Dendritic cell treated with granulocyte-macrophage colony-stimulating factor and Interleukin-4, amounts not matched to agents 40 ng/mL and 50 ng/mL, for 4 days (primary cell): ENCODE measurements at regions of chr11 and their contacts with region 1.

Region 1: GRCh38 chr11:6646918-6647679 is 8.5 kb downstream of the DCHS1 start:
- H3K4me3 Mint-ChIP-seq: no peak overlapping the region
- H3K27ac Mint-ChIP-seq: no peak overlapping the region
- H3K4me1 Mint-ChIP-seq: no peaks in the 10 kb centered on the region
- H3K27me3 Mint-ChIP-seq: no peaks in the 10 kb centered on the region

Region 2: DNA sequence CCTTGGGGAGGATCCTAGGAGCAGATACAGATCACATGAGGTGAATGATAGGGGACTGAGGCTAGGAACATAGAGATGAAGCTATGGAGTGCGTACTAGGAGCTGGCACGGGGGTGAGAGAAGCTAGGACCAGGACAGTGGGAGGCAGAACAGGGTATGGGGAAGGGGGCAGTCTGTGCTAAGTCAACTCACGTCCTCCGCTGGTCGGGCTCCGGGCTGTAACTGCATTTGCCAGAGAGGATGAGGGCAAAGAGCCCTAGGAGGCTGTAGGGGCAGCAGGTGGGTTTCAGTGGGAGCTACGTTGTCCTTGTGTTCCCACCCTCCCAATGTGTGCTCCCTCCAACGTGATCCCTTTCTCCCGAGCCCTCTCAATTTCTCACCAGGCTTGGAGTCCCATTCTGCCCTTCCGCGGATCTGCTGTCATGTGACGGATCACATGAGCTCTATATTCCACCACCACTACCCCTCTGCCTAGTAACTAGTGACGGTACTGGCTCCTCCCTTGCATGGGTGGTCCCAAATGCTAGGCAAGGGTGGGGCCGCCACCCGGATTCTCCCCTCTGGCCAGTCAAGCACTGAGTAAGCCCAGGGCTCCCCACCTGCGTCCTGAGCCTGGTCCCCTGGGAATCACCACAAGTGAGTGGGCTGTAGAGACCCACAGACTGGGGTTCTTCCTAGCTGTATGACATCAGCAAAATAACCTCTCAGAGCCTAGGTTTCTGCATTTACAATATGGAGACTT is 27.9 kb before region 1 on chr11 and contains the start of gene TPP1:
- intact Hi-C with region 1: loop called (anchors 2 kb)
- H3K4me3 Mint-ChIP-seq: no peak within 1 kb of the TSS
- H3K27ac Mint-ChIP-seq: no peak within 1 kb of the TSS
- H3K4me1 Mint-ChIP-seq: peaks cover 6% of the 10 kb centered on the region
- H3K27me3 Mint-ChIP-seq: peaks cover 2% of the 10 kb centered on the region